ENCODE measurements at regions of chr6 and their contacts with region 1.

Region 1: GRCh38 chr6:26103770-26104456 is 16.7 kb downstream of the HFE start:
- DNase-seq: peak; percentile 87
- H3K4me3 ChIP-seq: peak overlapping the region; percentile 65
- H3K27ac ChIP-seq: peak overlapping the region; percentile 78
- H3K4me1 ChIP-seq: peaks cover 27% of the 10 kb centered on the region
- H3K27me3 ChIP-seq: no peaks in the 10 kb centered on the region
- CTCF ChIP-seq: peak; percentile 68

Region 2: DNA sequence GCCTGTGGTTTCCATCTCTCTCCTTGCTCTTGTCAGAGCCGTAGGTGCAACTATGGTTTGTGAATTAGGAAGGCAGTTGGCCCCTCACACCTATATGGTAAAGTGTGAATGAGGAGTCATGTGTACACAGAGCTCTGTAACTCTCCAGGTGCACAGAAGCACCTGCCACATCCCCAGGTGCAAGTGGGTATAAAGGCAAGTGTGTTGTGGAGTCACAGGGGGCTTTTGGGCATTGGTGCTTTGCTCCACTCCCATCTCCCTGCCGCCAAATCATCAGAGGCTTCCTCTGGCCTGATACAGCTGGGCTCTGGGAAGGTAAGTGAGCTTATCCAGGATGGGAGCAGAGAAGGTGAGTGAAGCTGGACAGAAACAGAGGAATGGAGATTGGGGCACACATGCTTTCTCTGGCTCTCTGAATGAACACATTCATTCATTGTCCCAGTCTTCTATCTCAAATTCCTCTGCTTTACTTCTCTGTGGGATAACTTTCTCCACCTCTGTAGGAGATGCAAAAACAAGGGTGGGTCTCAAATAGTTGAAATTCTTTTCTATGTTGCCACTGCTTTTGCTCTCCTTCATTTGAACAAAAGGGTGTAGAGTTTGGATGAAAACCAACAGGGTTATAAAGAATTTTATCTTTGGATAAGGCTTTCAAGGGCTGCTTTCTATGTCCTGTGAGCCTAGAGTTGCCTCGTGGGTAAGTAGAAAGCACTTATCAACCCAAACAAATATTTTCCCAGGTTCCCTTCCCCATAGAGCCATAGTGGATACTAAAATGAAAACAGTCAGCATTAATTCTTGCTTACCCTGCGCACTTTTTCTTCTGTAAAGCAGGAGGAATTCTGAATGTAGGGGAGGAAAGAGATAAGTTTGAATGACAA is 1123.2 kb before region 1 on chr6:
- CTCF ChIA-PET with region 1: no interaction called
- POLR2A ChIA-PET with region 1: interaction called, 11 read pairs
- intact Hi-C with region 1: no loop called
- DNase-seq: peak; percentile 44 to 88
- H3K4me3 ChIP-seq: no peak overlapping the region
- H3K27ac ChIP-seq: peak overlapping the region; percentile 64
- H3K4me1 ChIP-seq: peaks cover 35% of the 10 kb centered on the region
- H3K27me3 ChIP-seq: no peaks in the 10 kb centered on the region
- CTCF ChIP-seq: no peak

Region 3: GRCh38 chr6:26025894-26026832 is 77.8 kb before region 1 on chr6:
- CTCF ChIA-PET with region 1: interaction called, 3 read pairs
- POLR2A ChIA-PET with region 1: interaction called, 20 read pairs
- intact Hi-C with region 1: loop called (anchors 1 kb)
- DNase-seq: peak; percentile 92 to 93
- H3K4me3 ChIP-seq: peak overlapping the region; percentile 75
- H3K27ac ChIP-seq: peak overlapping the region; percentile 98
- H3K4me1 ChIP-seq: peaks cover 57% of the 10 kb centered on the region
- H3K27me3 ChIP-seq: no peaks in the 10 kb centered on the region
- CTCF ChIP-seq: peak; percentile 89

Region 4: GRCh38 chr6:26115226-26115625 is 11.3 kb after region 1 on chr6:
- CTCF ChIA-PET with region 1: interaction called, 10 read pairs
- POLR2A ChIA-PET with region 1: interaction called, 5 read pairs
- intact Hi-C with region 1: no loop called
- DNase-seq: no peak
- H3K4me3 ChIP-seq: no peak overlapping the region
- H3K27ac ChIP-seq: no peak overlapping the region
- H3K4me1 ChIP-seq: 0 out of 2 replicates have a peak, but pooled peaks cover 1% of the 10 kb centered on the region
- H3K27me3 ChIP-seq: no peaks in the 10 kb centered on the region
- CTCF ChIP-seq: no peak

Region 5: DNA sequence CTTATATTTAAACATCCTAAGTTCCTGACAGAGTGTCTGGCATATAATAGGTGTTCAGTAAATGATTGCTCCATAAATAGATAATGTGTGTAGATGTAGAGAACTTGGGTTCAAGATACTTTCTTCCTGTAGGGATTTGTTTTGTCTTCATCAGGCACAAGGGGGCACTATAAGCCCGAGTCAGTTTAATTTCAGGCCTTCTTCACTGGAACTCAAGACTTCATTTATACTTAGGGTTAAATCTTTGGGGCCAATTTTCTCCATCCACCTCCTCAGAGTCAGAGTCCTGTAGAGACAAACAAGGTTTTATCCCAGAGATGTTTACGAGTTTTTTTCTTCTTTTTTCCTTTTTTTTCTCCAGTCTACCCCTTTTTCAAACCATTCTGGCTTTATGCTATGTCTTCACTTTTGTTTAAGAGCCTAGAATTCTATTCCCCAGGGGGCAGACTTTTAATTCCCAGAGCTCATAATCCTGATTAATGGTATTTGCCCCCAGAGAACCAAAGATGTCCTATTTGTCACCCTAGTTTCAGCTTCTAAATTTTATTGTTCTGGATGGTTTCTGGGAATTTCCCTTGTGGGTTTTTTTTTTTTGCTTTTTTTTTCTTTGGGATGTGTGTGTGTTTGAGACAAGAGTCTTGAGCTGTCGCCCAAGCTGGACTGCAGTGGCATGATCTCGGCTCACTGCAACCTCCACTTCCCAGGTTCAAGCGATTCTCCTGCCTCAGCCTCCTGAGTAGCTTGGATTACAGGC is 71.7 kb after region 1 on chr6:
- CTCF ChIA-PET with region 1: interaction called, 5 read pairs
- POLR2A ChIA-PET with region 1: interaction called, 11 read pairs
- intact Hi-C with region 1: no loop called
- DNase-seq: no peak
- H3K4me3 ChIP-seq: no peak overlapping the region
- H3K27ac ChIP-seq: no peak overlapping the region
- H3K4me1 ChIP-seq: peaks cover 23% of the 10 kb centered on the region
- H3K27me3 ChIP-seq: no peaks in the 10 kb centered on the region
- CTCF ChIP-seq: peak; percentile 82

Region 6: DNA sequence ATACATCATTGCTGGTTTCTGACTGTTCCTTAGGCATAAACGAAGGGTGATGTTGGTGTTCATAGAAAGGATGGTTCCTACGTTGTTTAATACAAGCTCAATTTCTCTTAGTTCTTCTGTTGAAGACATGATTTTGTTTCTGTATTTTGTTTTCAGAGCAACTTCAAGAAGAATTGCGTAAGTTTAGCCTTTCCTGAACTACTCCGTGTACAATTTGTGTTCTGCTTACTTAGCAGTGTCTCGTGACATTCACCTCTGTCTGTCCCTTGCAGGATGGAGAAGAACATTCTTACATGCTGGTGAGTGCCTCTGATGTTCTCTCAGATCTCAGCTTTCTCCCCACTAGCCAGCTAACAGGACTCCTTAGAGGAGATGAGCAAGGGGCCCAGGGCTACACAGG is 286.6 kb after region 1 on chr6:
- CTCF ChIA-PET with region 1: interaction called, 11 read pairs
- POLR2A ChIA-PET with region 1: no interaction called
- intact Hi-C with region 1: no loop called
- DNase-seq: no peak
- H3K4me3 ChIP-seq: no peak overlapping the region
- H3K27ac ChIP-seq: no peak overlapping the region
- H3K4me1 ChIP-seq: peaks cover 21% of the 10 kb centered on the region
- H3K27me3 ChIP-seq: no peaks in the 10 kb centered on the region
- CTCF ChIP-seq: no peak